Heart left ventricle (tissue), 16 donors: ENCODE measurements at regions of chr2 and their contacts with region 1.

Region 1: GRCh38 chr2:19801367-19802080 is 100.3 kb downstream of the TTC32 start:
- DNase-seq: peak; percentile 82 to 95 (median 90)
- ATAC-seq: peak; percentile 95 to 98 (median 98)
- H3K4me3 ChIP-seq: no peak overlapping the region
- H3K27ac ChIP-seq: peak overlapping the region in 10 of 12 donors; percentile 8 to 77 (median 38)
- H3K4me1 ChIP-seq: peaks cover 2 to 31% (median 16%) of the 10 kb centered on the region in 12 donors
- H3K27me3 ChIP-seq: no peaks in the 10 kb centered on the region
- CTCF ChIP-seq: no peak
- POLR2A ChIP-seq: no peak

Region 2: DNA sequence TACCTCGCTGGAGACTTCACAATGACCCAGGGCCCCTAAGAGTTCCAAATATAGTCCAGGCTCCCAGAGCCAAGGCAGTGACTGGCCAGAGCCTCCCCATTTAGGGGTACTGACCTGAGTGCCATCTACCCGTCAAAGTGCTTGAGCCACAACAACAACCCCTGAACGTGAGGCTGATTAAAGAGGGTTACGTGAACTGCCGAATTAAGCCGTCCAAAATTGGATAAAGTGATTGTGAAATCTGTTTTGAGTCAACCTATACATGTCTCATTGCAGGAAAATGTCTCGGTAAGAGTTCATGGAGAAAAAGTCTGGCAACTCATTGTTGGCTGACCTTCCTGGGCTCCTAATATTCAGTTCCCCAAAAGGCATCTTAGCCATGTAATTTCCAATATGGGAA is 16.1 kb before region 1 on chr2:
- intact Hi-C with region 1: loop called in 1 of 10 experiments (anchors 2 kb)
- DNase-seq: peak in 2 of 5 donors; percentile 43 to 61
- ATAC-seq: peak; percentile 80 to 93 (median 88)
- H3K4me3 ChIP-seq: peak overlapping the region in 1 of 12 donors; percentile 37
- H3K27ac ChIP-seq: peak overlapping the region in 4 of 12 donors; percentile 3 to 61 (median 13)
- H3K4me1 ChIP-seq: peaks cover 0 to 16% (median 2%) of the 10 kb centered on the region in 12 donors
- H3K27me3 ChIP-seq: no peaks in the 10 kb centered on the region
- CTCF ChIP-seq: no peak
- POLR2A ChIP-seq: no peak